ENCODE measurements at regions of chr12 and their contacts with region 1.

Region 1: DNA sequence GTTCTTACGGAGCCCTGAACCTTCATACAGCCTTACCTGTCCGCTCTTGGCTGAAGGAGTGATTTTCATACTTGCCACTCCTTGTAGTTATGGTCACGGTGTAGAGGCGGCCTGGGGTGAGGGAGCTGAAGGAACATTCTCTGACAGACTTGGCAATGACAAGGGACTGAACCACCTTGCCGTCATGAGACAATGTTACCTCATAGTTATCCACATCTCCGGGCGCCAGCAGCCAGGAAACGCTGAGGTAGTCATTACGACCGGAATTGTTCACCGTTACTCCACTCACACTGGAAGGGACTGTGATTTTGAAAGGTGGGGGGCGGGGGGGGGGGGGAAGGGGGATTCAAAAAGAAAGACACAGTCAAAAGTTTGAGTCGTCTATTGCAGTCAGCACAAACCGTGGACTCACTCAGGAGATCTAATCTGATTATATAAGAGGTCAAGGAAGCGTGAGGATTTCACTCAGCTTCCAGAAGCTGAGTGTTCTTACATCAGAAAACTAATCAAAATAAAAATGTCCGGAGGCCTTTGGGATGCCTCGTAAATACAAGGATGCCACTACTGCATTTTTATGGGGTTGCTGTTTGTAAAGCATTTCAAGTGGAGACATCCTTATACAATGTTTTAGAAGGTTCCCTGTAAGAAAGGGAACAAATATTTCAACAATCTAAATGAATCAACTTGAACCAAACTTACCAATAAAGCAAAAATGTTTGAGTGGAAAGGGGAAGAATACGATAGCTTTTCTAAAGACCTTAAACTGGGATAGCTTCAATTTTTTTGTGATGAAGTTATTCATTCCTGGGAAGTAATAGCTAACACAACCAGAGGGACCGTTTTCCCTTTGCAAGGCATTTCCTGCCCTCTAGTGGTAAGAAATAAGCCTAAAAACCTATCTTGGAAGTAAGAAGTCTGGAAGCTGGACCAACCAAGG is 60.6 kb downstream of the PTPRB start:
- DNase-seq: peak; percentile 42
- CTCF ChIP-seq: peak; percentile 54

Region 2: GRCh38 chr12:69897445-69898143 is 679.0 kb before region 1 on chr12:
- in situ Hi-C with region 1: loop called (anchors 10 kb)
- DNase-seq: no peak
- CTCF ChIP-seq: no peak

Region 3: DNA sequence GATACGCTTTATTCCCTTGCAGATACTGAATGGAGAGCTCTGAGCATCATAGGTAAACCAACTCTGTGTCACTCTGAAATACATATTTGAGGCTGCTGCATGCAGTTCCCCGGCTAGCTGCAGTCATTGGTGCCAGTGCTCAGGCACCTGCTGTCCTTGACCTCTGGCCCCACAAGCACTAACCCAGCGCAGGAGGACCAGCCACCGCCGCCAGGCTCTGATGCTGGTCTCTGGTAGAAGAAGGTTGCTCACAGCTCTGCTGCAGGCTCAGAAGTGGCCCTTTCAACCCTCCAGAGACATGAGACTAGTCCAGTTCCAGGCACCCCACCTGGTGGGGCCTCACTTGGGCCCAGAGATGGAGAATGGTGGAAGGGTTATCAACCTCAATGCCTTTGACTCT is 95.1 kb after region 1 on chr12:
- in situ Hi-C with region 1: no loop called
- DNase-seq: no peak
- CTCF ChIP-seq: no peak

Measured in GM13976 (cell line).